Activated CD4-positive, alpha-beta memory T cell treated with anti-CD3 and anti-CD28 coated beads, Interleukin-2, amount 10 ng/mL, durations not matched to agents 7 days and 5 days (primary cell): ENCODE measurements at regions of chr3 and their contacts with region 1.

Region 1: DNA sequence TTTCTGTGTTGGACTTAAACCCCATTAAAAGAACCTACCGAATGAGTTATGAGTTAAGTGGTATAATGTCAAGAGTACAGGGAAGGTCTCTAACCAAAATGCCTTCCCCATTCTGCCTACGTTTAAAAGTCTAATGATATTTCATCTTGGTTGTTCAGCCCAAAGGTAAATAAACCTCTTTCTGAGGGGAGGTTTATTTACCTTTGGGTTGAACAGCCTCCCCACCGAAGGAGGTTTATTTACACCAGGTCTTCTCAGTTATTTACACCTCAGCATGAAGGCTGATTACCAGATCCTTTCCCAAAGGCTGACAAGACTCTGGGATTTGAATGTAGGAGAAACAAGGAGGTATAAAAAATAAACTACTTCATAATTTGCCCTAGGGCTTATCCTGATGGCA is 11.5 kb downstream of the MRPL47 start:
- DNase-seq: no peak
- H3K4me3 Mint-ChIP-seq: no peak overlapping the region
- H3K27ac Mint-ChIP-seq: no peak overlapping the region
- H3K4me1 Mint-ChIP-seq: peaks cover 2% of the 10 kb centered on the region
- H3K27me3 Mint-ChIP-seq: no peaks in the 10 kb centered on the region

Region 2: GRCh38 chr3:179604321-179605078 is 11.6 kb after region 1 on chr3 and contains the starts of genes MRPL47 and NDUFB5:
- CTCF ChIA-PET with region 1: no interaction called
- POLR2A ChIA-PET with region 1: interaction called, 13 read pairs
- DNase-seq: peak; percentile 94
- H3K4me3 Mint-ChIP-seq: peak within 1 kb of the TSS; percentile 99
- H3K27ac Mint-ChIP-seq: peak within 1 kb of the TSS; percentile 96
- H3K4me1 Mint-ChIP-seq: peaks cover 59% of the 10 kb centered on the region
- H3K27me3 Mint-ChIP-seq: no peaks in the 10 kb centered on the region
- total RNA-seq, gene MRPL47: 34.8 to 36.0 TPM
- total RNA-seq, gene NDUFB5: 102 to 110 TPM

Region 3: GRCh38 chr3:179688850-179689249 is 96.0 kb after region 1 on chr3:
- CTCF ChIA-PET with region 1: no interaction called
- POLR2A ChIA-PET with region 1: no interaction called
- DNase-seq: no peak
- H3K4me3 Mint-ChIP-seq: no peak overlapping the region
- H3K27ac Mint-ChIP-seq: no peak overlapping the region
- H3K4me1 Mint-ChIP-seq: no peaks in the 10 kb centered on the region
- H3K27me3 Mint-ChIP-seq: no peaks in the 10 kb centered on the region